Breast epithelium (tissue), 4 donors: ENCODE measurements at regions of chr5 and their contacts with region 1.

Region 1: DNA sequence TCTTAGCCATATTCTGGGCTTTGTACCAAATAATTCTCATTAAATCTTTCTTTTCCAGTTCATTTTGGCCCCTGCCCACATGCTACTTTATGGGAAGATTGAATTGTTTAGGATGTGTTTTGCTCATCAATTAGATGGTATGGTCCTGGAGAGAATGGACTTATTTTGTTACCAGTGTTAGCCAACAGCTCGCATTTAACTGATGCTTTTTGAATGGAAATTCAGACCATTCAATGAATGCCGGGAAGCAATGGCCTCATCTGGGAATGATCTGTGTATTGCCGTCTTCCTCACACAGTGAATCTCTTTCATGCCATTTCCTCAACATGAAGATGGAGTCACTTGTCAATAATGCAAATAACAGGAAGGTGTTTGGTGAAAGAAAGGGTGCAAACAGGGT is 370.6 kb upstream of the PIK3R1 start:
- DNase-seq: no peak
- H3K4me3 ChIP-seq: no peak overlapping the region
- H3K27ac ChIP-seq: no peak overlapping the region
- H3K4me1 ChIP-seq: no peaks in the 10 kb centered on the region
- H3K27me3 ChIP-seq: no peaks in the 10 kb centered on the region
- CTCF ChIP-seq: no peak
- POLR2A ChIP-seq: no peak

Region 2: DNA sequence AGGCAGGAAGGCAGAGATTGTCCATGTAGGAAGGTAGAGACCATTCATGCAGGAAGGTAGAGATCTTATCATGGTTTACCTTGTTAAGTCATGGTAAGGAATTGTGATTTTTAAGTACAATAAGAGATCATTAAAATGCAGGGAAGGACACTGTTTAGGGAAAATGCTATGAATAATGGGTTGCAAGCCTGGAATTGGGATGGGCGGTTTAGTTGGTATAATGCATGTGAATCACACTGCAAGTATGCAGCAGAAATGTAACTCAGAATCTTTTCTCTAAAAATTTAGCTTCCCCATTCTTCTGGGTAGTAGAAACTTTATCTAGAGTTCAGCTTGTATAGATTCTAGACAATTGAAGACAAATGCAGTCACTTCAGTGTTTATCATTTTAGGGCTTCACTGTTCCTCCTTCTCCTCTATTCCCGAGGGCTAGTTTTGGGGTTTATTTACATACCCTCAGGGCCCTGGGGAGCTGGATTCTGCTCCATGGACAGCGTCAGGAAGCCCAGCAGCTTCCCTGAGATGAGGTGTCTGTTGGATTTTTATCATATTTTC is 1488.8 kb before region 1 on chr5:
- intact Hi-C with region 1: no loop called
- DNase-seq: no peak
- H3K4me3 ChIP-seq: no peak overlapping the region
- H3K27ac ChIP-seq: no peak overlapping the region
- H3K4me1 ChIP-seq: no peaks in the 10 kb centered on the region
- H3K27me3 ChIP-seq: no peaks in the 10 kb centered on the region
- CTCF ChIP-seq: no peak
- POLR2A ChIP-seq: no peak

Region 3: DNA sequence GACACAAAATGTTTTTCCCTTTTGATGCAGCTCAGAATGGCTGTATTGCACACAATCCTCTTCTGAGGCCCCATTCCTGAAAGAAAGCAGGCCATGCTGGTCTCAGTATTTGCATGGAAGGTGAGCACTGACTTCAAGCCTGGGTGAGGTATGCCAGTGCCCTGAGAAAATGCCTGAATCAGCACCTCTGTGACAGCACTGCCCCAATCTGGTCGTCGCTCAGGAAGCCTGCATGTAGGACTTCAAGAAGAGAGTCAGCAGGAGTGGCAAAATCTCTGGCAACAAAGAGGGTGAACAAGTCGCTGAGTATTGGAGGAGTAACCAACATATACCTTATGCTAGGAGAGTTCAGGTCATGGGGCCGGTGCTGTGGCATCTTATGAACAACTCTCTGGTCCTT is 54.5 kb before region 1 on chr5:
- intact Hi-C with region 1: loop called (anchors 2 kb)
- DNase-seq: no peak
- H3K4me3 ChIP-seq: no peak overlapping the region
- H3K27ac ChIP-seq: no peak overlapping the region
- H3K4me1 ChIP-seq: no peaks in the 10 kb centered on the region
- H3K27me3 ChIP-seq: no peaks in the 10 kb centered on the region
- CTCF ChIP-seq: no peak
- POLR2A ChIP-seq: no peak

Region 4: GRCh38 chr5:67815455-67816391 is 29.2 kb before region 1 on chr5:
- intact Hi-C with region 1: no loop called
- DNase-seq: no peak
- H3K4me3 ChIP-seq: no peak overlapping the region
- H3K27ac ChIP-seq: peak overlapping the region in 1 of 2 donors; percentile 32
- H3K4me1 ChIP-seq: no peaks in the 10 kb centered on the region
- H3K27me3 ChIP-seq: no peaks in the 10 kb centered on the region
- CTCF ChIP-seq: no peak
- POLR2A ChIP-seq: no peak

Region 5: DNA sequence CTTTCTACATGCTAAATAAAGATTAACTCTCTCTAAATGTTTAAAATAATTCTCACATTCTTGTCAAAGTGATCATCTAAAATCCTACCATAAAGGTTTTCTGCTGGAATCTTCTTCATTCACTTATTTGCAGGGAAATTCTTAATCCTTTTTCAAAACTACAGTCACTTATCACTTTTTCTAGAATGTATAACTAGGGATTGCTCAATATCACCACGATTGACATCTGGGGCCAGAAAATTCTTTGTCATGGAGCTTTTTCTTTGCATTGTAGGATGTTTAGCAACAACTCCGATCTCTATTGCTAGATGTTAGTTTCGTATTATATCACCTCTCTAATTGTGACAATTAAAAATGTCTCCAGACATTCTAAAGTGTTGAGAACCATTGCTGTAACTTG is 25.7 kb after region 1 on chr5:
- intact Hi-C with region 1: no loop called
- DNase-seq: no peak
- H3K4me3 ChIP-seq: no peak overlapping the region
- H3K27ac ChIP-seq: no peak overlapping the region
- H3K4me1 ChIP-seq: no peaks in the 10 kb centered on the region
- H3K27me3 ChIP-seq: no peaks in the 10 kb centered on the region
- CTCF ChIP-seq: no peak
- POLR2A ChIP-seq: no peak

Region 6: DNA sequence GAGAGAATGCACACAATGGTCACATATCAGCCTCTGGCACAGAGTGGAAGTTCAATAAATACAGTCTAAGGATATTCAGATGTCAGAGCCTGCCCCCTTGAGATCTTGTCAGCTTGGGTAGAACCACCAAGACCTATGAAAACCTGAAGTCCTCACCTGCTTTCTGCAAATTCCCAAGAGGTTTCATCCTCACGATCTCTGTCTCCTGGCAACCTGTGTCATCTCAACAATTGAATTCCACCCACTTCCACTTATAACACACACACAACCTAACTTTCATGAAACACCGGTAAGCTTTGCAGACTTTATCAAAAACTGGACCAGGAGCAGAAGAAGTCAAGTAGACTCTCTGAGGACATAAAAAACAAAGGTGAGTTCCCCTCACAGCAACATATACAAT is 1097.2 kb after region 1 on chr5:
- intact Hi-C with region 1: no loop called
- DNase-seq: no peak
- H3K4me3 ChIP-seq: no peak overlapping the region
- H3K27ac ChIP-seq: no peak overlapping the region
- H3K4me1 ChIP-seq: no peaks in the 10 kb centered on the region
- H3K27me3 ChIP-seq: no peaks in the 10 kb centered on the region
- CTCF ChIP-seq: no peak
- POLR2A ChIP-seq: no peak